ENCODE measurements at regions of chr9 and their contacts with region 1.

Region 1: GRCh38 chr9:14428781-14429230 is 114.9 kb upstream of the NFIB start:
- DNase-seq: peak; percentile 53
- H3K4me3 ChIP-seq: no peak overlapping the region; a peak in 1 of 4 replicates
- H3K27ac ChIP-seq: peak overlapping the region in 1 of 2 experiments; percentile 18; a peak in 1 of 4 replicates
- H3K4me1 ChIP-seq: peaks cover 7 to 15% of the 10 kb centered on the region in 2 experiments; a peak in 3 of 4 replicates
- H3K27me3 ChIP-seq: no peaks in the 10 kb centered on the region
- CTCF ChIP-seq: peak; percentile 91
- EP300 ChIP-seq: no peak
- RAD21 ChIP-seq: peak; percentile 76

Region 2: GRCh38 chr9:13351778-13352386 is 1076.9 kb before region 1 on chr9:
- CTCF ChIA-PET with region 1: interaction called, 10 read pairs
- POLR2A ChIA-PET with region 1: no interaction called
- DNase-seq: peak; percentile 24
- H3K4me3 ChIP-seq: no peak overlapping the region
- H3K27ac ChIP-seq: no peak overlapping the region
- H3K4me1 ChIP-seq: no peaks in the 10 kb centered on the region; a peak in 1 of 4 replicates
- H3K27me3 ChIP-seq: no peaks in the 10 kb centered on the region
- CTCF ChIP-seq: peak; percentile 82
- EP300 ChIP-seq: no peak
- RAD21 ChIP-seq: peak; percentile 78

Measured in SK-N-SH (cell line).